ENCODE measurements at regions of chr12 and their contacts with region 1.

Region 1: GRCh38 chr12:47079468-47079980 is at the starts of genes AMIGO2 and PCED1B:
- DNase-seq: peak; percentile 63
- H3K4me3 Mint-ChIP-seq: peak within 1 kb of the TSS; percentile 97
- H3K27ac Mint-ChIP-seq: peak within 1 kb of the TSS; percentile 97
- H3K4me1 Mint-ChIP-seq: peaks cover 81% of the 10 kb centered on the region
- H3K27me3 Mint-ChIP-seq: no peaks in the 10 kb centered on the region
- total RNA-seq, gene AMIGO2: 11.6 and 12.5 TPM in 2 replicates
- total RNA-seq, gene PCED1B: 50.8 and 55.5 TPM in 2 replicates

Region 2: GRCh38 chr12:46209914-46210872 is 869.3 kb before region 1 on chr12:
- intact Hi-C with region 1: loop called (anchors 5 kb)
- DNase-seq: peak; percentile 31
- H3K4me3 Mint-ChIP-seq: peak overlapping the region; percentile 52
- H3K27ac Mint-ChIP-seq: peak overlapping the region; percentile 96
- H3K4me1 Mint-ChIP-seq: peaks cover 64% of the 10 kb centered on the region
- H3K27me3 Mint-ChIP-seq: no peaks in the 10 kb centered on the region

Region 3: DNA sequence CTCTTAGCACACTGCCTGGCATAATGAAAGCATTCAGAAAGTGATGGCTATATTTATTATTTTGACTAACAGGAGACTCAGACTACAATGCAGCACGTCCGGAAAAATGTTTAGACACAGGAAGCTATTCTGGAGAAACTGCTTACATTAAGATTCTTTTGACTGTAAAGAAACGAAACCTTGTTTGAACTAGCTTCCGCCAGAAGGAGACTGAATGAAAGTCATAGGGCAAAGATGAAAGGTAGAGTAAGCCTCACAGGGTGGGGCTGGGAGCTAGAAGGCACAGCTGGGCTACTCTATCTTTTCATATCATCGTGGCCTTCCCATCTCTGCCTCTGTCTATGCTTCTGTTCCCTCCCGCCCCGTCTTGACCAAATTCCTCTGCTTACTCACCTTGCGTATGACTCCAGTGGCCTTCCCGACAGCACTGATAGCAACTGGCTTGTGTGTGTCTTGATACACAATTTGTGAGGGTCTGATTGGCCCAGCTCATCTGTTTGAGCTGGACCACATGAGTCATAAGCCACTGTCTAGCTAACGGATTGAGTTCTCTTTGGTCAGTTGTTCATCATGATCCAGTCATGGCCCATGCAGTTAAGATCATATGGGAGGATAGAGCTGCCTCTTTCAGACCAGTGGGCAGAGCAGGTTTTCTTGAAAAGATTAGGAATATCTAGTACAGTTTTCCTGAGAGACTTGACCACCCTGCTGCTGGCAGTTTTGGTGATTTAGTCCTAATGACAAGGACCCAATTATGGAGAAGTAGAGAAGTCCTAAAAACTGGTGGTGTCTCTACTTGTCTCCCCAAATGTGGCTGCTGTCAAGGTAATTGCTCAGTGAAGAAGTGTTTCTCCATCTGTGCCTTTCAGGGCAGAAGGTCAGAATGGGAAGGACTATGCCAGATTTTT is 555.4 kb before region 1 on chr12:
- intact Hi-C with region 1: loop called (anchors 10 kb)
- DNase-seq: peak; percentile 48
- H3K4me3 Mint-ChIP-seq: peak overlapping the region; percentile 81
- H3K27ac Mint-ChIP-seq: peak overlapping the region; percentile 99
- H3K4me1 Mint-ChIP-seq: peaks cover 52% of the 10 kb centered on the region
- H3K27me3 Mint-ChIP-seq: no peaks in the 10 kb centered on the region

Region 4: DNA sequence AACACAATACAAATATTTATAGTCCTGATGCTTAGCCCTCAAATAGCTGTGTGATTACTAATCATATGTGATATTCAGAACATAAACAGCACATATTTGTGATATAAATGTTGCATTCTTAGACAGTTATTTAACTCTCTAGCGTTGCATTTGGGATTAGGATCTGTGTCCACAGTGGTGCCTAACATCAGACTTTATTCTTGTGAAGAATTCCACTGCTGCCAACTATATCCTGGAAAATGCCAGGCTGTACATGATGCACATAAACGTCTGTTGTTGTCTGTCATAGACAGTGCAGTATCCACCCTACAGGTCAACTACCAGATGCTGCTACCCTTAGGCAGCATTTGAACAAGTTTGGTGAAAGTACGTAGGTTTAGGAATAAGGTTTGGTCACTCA is 292.8 kb before region 1 on chr12:
- intact Hi-C with region 1: no loop called
- DNase-seq: no peak
- H3K4me3 Mint-ChIP-seq: no peak overlapping the region
- H3K27ac Mint-ChIP-seq: no peak overlapping the region
- H3K4me1 Mint-ChIP-seq: peaks cover 14% of the 10 kb centered on the region
- H3K27me3 Mint-ChIP-seq: no peaks in the 10 kb centered on the region

Region 5: DNA sequence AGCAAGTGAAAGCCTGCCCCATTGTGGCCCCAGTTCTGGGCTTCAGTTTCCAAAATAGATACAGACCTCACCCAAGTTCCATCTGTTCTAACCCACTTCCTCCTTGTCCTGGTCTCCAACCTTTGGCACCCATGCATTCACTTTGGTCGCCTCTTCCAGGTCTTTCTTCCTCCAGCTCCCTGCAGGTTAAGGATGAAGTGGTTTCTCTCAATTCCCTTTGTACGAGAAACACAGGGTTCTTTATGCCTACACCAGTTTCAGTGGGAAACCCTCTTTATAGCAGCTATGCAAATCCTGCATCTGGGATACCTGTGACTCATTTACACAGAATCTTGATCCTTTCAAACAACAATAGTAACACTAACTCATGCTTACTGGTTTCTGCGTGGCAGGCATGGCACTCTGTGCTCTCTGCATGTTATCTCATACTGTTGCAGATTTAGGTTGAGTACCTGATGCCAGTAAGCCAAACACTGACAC is 110.8 kb after region 1 on chr12:
- intact Hi-C with region 1: loop called (anchors 1 kb)
- DNase-seq: no peak
- H3K4me3 Mint-ChIP-seq: peak overlapping the region; percentile 24
- H3K27ac Mint-ChIP-seq: peak overlapping the region; percentile 71
- H3K4me1 Mint-ChIP-seq: peaks cover 69% of the 10 kb centered on the region
- H3K27me3 Mint-ChIP-seq: no peaks in the 10 kb centered on the region

Region 6: DNA sequence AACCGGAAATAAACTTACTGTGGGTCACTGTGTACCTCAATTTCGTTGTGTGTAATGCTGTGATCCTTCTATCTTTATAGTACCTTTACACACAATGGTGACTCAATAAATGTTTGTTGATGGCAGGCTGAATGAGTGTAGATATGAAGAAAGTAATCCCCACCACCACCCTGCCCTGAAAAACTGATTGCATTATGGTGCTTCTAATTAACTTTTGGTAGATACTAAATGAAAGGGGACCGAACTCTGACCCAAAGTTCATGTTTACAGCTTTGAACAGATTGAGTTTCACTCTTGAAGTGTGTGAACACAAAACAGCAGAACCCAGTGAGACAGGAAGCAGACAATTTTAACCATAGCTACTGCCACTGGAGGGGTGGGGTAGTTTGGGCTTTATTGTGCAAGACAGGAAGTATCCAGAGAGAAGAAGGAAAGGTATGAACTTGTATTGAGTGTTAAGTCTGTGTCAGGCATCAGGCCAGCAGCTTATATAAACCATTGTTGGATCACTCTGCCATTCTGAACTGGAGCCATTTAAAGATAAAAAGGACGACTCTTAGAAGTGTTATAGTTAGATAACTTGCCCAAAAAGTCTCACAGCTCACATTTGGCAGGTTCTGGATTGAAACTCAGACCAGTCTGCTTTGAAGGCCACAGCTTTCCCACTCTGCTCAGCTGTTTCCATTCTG is 197.2 kb after region 1 on chr12:
- intact Hi-C with region 1: loop called (anchors 2 kb)
- DNase-seq: peak; percentile 63
- H3K4me3 Mint-ChIP-seq: peak overlapping the region; percentile 46
- H3K27ac Mint-ChIP-seq: peak overlapping the region; percentile 88
- H3K4me1 Mint-ChIP-seq: peaks cover 66% of the 10 kb centered on the region
- H3K27me3 Mint-ChIP-seq: no peaks in the 10 kb centered on the region

Region 7: DNA sequence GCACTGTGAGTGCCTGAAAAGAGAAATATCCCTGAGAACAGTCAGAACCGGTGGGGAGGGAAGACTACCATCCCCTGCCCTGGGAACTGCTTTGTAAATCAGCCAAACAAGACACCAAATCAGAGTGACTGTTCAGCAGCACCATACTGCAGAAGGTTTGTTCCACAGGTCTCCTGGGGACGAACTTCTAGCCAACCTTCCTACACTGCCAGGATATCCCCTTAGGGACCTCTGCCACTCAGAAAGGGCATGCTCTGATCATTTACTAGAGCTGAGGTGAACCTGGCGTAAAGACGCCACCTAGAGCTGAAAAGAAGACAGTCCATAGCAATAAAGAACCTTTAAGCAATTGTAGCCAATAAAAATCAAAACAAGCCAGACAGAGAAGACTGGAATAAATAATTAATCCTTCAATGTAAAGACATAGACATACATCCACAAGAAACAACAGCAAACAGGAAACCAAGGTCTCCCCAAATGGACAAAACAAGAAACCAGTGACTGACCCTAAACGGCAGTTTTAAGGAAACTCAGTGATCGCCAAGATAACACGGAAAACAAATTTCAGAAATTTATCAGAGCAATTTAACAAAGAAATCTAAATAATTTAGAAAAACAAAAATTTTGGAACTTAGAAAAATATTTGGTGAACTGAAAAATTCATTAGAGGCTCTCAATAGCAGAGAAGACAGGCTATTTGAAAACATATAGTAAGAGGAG is 228.3 kb after region 1 on chr12:
- intact Hi-C with region 1: loop called (anchors 1 kb)
- DNase-seq: peak; percentile 43
- H3K4me3 Mint-ChIP-seq: peak overlapping the region; percentile 91
- H3K27ac Mint-ChIP-seq: peak overlapping the region; percentile 87
- H3K4me1 Mint-ChIP-seq: peaks cover 69% of the 10 kb centered on the region
- H3K27me3 Mint-ChIP-seq: no peaks in the 10 kb centered on the region

Region 8: GRCh38 chr12:47679785-47680184 is 600.3 kb after region 1 on chr12:
- intact Hi-C with region 1: no loop called
- DNase-seq: no peak
- H3K4me3 Mint-ChIP-seq: no peak overlapping the region
- H3K27ac Mint-ChIP-seq: no peak overlapping the region
- H3K4me1 Mint-ChIP-seq: peaks cover 18% of the 10 kb centered on the region
- H3K27me3 Mint-ChIP-seq: no peaks in the 10 kb centered on the region